ENCODE measurements at regions of chr1 and their contacts with region 1.

Region 1: GRCh38 chr1:203867816-203868215 is 6.4 kb downstream of the SNRPE start:
- DNase-seq: no peak
- H3K4me3 ChIP-seq: no peak overlapping the region
- CTCF ChIP-seq: no peak
- POLR2A ChIP-seq: no peak

Region 2: GRCh38 chr1:203754455-203754864 is 113.4 kb before region 1 on chr1:
- intact Hi-C with region 1: no loop called
- DNase-seq: no peak
- H3K4me3 ChIP-seq: no peak overlapping the region
- CTCF ChIP-seq: no peak
- POLR2A ChIP-seq: no peak

Region 3: DNA sequence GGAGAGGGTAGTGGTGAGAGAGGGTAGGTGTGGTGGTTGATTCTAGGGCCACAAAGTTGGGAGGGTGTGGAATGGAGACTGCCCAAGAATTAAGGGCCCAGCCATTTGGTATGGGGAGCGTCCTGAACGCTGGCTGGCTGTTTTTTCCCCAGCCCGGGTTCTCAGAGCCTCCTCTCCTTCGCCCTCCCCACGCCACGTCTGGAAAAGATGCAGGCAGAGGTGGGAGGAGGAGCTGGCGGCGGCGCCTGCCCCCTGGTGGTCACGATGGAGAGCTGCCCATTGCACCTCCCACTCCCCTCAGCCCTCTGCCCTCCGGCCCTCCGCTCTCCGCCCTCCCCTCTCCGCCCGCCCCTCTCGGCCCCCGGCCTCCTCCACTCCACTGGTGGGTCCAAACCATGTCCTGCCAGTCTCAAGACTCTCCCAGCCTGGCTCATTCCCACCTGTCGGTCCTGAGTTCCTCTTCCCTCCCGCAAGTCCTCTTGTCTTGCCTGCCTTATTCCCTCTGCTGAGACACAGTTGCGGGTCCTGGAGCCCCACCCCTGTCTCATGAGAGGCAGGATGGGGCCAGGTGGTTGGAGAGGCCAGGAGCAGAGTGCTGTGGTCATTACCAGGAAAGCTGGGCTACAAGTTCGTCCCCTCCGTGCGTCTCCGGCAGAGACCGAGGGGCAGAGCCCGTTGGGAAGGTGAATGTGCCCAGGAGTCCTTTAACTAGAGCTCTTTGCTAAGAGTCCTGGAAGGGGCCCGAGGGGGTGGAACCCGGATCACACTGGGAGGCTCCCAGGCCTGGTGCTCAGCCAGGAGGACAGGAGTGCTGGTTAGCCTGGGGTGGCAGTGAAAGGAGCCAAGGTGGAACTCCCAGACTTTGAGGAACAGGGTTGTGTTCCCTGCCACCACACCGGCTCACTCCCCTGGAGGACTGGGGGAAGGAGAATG is 261.4 kb after region 1 on chr1:
- intact Hi-C with region 1: loop called (anchors 5 kb)
- DNase-seq: peak; percentile 65 to 94
- H3K4me3 ChIP-seq: no peak overlapping the region
- CTCF ChIP-seq: peak in 1 of 3 donors; percentile 87
- POLR2A ChIP-seq: no peak

Measured in lower leg skin (tissue), 4 donors.